ENCODE measurements at regions of chr17 and their contacts with region 1.

Region 1: GRCh38 chr17:44186307-44187130 is at the start of gene TMUB2:
- DNase-seq: peak; percentile 100
- ATAC-seq: peak; percentile 92
- H3K4me3 Mint-ChIP-seq: peak within 1 kb of the TSS; percentile 99
- H3K27ac Mint-ChIP-seq: peak within 1 kb of the TSS; percentile 100
- H3K4me1 Mint-ChIP-seq: peaks cover 32% of the 10 kb centered on the region
- H3K27me3 Mint-ChIP-seq: no peaks in the 10 kb centered on the region
- total RNA-seq, gene TMUB2: 19.8 to 20.3 TPM

Region 2: DNA sequence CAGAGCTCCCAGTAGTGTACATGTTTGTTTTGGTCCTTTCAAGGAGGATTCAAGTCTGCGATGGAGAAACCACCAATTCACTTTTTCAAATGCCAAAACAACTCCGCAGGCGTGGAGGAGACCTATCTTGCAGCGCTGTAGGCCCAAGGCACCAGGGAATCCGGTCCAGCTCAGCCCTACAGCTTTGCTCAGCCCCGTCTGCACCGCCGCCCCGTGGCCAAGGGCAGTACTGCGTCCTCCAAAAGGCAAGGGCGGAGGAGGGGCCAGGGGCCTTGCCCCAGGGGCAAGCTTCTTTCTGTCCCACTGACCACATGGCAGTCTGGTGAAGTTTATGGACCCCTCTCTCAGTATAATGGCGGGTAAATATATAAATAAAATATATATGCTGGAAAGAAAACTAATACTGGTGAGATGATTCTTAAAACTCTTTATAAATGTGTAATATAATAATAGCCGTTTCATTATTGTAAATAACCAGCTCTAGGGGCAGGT is 340.3 kb before region 1 on chr17:
- CTCF ChIA-PET with region 1: no interaction called
- POLR2A ChIA-PET with region 1: no interaction called
- intact Hi-C with region 1: no loop called
- DNase-seq: peak; percentile 89
- ATAC-seq: peak; percentile 99
- H3K4me3 Mint-ChIP-seq: no peak overlapping the region
- H3K27ac Mint-ChIP-seq: no peak overlapping the region
- H3K4me1 Mint-ChIP-seq: no peaks in the 10 kb centered on the region
- H3K27me3 Mint-ChIP-seq: peaks cover 19% of the 10 kb centered on the region

Region 3: GRCh38 chr17:43907425-43907981 is 279.0 kb before region 1 on chr17 and contains the start of gene MPP2:
- CTCF ChIA-PET with region 1: no interaction called
- POLR2A ChIA-PET with region 1: no interaction called
- intact Hi-C with region 1: no loop called
- DNase-seq: peak; percentile 75
- ATAC-seq: peak; percentile 49
- H3K4me3 Mint-ChIP-seq: peak within 1 kb of the TSS; percentile 34
- H3K27ac Mint-ChIP-seq: no peak within 1 kb of the TSS
- H3K4me1 Mint-ChIP-seq: peaks cover 17% of the 10 kb centered on the region
- H3K27me3 Mint-ChIP-seq: peaks cover 25% of the 10 kb centered on the region
- total RNA-seq, gene MPP2: 1.2 to 1.3 TPM

Region 4: DNA sequence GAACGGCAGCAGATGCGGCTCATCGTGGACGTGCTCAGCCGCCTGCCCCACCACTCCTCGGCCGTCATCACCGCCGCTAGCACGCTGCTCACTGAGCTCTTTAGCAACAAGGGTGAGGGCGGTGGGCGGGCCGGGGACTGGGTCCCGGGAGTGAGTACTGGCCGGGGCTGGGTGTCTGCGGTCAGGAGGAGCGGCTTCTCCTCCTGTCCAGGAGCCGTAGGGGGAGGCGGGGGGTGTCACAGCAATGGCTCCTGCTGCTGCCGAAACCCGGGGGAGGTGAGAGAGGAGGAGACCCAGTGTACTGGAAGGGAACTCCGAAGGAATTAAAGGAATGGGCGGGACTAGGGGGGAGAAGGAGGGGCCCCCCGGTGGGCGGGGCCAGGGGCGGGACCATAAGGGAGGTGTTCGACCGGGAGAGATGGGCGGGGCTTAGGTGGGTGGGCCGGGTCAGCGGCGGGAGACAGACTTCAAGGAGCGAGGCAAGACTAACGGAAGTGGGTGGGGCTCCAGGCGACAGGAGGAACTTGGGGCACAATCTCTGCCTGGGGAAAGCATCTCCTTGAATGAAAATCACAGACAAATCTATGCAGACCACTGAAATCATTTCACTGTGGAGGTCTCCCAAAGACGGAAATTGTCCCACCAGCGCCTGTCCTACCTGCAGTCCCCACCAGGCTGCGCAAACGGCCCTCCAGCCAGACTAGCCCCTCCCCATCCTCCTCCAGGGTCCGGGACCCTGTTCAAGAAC is 179.7 kb before region 1 on chr17:
- CTCF ChIA-PET with region 1: no interaction called
- POLR2A ChIA-PET with region 1: interaction called, 9 read pairs
- intact Hi-C with region 1: loop called in 1 of 2 experiments (anchors 1 kb)
- DNase-seq: peak; percentile 99
- ATAC-seq: peak; percentile 84
- H3K4me3 Mint-ChIP-seq: peak overlapping the region; percentile 78
- H3K27ac Mint-ChIP-seq: peak overlapping the region; percentile 86
- H3K4me1 Mint-ChIP-seq: peaks cover 20% of the 10 kb centered on the region
- H3K27me3 Mint-ChIP-seq: peaks cover 17% of the 10 kb centered on the region

Region 5: DNA sequence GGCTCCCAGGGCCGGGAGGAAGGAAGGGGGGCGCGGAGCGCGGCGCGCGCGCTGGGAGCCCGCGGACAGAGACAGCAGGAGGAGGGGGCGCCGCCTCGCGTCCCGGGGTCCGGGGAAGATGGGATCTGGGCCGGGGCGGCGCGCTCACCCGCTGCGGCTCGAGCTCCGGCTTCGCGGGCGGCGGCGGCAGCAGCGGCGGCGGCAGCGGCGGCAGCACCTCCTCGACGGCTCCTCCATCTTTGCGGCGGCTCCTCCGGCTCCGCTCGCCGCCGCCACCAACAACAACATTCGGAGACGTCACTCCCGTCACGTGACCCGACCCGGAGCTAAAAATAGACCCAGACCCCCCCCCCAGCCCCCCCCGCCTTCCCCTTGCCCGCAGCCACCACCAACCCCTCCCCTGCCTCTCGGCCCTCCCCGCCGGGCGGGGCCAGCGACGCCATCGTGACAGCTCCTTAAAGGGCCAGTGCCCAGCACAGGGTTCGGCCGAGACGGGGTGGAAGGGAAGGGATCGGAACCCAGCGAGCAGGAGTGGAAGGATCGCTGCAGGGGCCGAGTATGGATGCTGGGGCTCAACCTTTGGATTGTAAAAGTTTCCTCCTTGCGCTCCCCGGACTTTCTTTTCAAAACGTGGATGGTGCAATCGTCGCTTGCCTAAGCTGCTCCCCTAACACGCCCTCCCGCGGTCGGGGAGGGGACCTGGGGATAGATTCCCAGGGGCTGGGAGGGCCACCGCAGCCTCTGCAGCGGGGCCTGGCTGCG is 63.0 kb before region 1 on chr17 and contains the start of gene HDAC5:
- CTCF ChIA-PET with region 1: interaction called, 5 read pairs
- POLR2A ChIA-PET with region 1: interaction called, 8 read pairs
- intact Hi-C with region 1: loop called (anchors 1 to 2 kb)
- DNase-seq: peak; percentile 98
- ATAC-seq: peak; percentile 97
- H3K4me3 Mint-ChIP-seq: peak within 1 kb of the TSS; percentile 87
- H3K27ac Mint-ChIP-seq: peak within 1 kb of the TSS; percentile 97
- H3K4me1 Mint-ChIP-seq: peaks cover 22% of the 10 kb centered on the region
- H3K27me3 Mint-ChIP-seq: no peaks in the 10 kb centered on the region
- total RNA-seq, gene HDAC5: 16.5 to 22.0 TPM

Region 6: DNA sequence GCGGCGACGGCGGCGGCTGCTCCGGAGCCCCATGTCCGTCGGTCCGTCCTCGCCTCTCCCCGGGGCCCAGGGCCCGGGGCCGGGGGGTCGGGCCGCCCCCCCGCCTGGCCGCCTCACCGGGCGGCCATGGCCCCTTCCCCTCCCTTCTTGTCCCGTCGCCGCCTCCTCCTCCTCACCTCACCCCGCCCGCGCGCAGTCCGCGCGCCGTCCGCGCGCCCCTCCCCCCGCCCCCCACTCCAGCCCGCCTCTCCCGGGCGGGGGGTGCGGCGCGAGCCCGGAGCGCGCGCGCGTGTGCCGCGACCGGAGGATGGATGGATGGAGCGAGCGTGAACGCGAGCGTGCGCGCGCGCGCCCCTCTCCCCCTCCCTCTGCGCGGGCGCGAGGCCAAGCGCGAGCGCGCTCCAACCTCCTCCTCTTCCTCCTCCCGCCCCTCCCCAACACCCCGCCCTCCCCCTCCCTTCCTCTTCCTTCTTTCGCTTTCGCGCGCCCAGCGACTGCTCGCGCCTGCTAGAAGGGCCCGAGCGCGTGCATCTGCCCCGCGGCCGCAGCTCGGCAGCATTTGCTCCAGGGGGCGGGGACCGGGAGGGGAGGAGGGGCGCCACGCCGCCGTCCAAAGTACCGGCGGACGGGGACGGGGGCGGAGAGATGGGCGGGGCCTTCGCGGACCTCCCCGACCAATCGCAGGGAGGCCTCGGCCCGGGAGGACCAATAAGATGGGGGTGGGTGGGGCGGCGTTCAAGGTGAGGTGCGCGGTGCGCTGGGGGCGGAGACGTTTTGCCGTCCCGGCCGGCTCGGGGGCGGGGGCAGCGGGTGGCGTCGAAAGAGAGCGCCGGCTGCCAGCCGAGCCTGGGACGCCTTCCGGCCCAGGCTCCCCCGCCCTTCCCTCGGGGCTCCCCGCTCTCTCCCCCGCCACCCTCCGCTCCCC is 13.3 kb after region 1 on chr17 and contains the start of gene ATXN7L3:
- CTCF ChIA-PET with region 1: interaction called, 8 read pairs
- POLR2A ChIA-PET with region 1: interaction called, 4 read pairs
- intact Hi-C with region 1: loop called (anchors 1 kb)
- DNase-seq: peak; percentile 100
- ATAC-seq: peak; percentile 84
- H3K4me3 Mint-ChIP-seq: peak within 1 kb of the TSS; percentile 88
- H3K27ac Mint-ChIP-seq: peak within 1 kb of the TSS; percentile 94
- H3K4me1 Mint-ChIP-seq: peaks cover 38% of the 10 kb centered on the region
- H3K27me3 Mint-ChIP-seq: no peaks in the 10 kb centered on the region
- total RNA-seq, gene ATXN7L3: 66.3 to 70.6 TPM

Region 7: GRCh38 chr17:44324571-44325275 is 138.2 kb after region 1 on chr17 and contains the start of gene SLC25A39:
- CTCF ChIA-PET with region 1: interaction called, 3 read pairs
- POLR2A ChIA-PET with region 1: interaction called, 6 read pairs
- intact Hi-C with region 1: loop called (anchors 1 kb)
- DNase-seq: peak; percentile 97
- ATAC-seq: peak; percentile 74
- H3K4me3 Mint-ChIP-seq: peak within 1 kb of the TSS; percentile 84
- H3K27ac Mint-ChIP-seq: peak within 1 kb of the TSS; percentile 94
- H3K4me1 Mint-ChIP-seq: peaks cover 21% of the 10 kb centered on the region
- H3K27me3 Mint-ChIP-seq: no peaks in the 10 kb centered on the region
- total RNA-seq, gene SLC25A39: 127 to 129 TPM

Region 8: GRCh38 chr17:45148183-45149036 is 961.9 kb after region 1 on chr17 and contains the start of gene HEXIM1:
- CTCF ChIA-PET with region 1: no interaction called
- POLR2A ChIA-PET with region 1: no interaction called
- intact Hi-C with region 1: loop called in 1 of 2 experiments (anchors 5 kb)
- DNase-seq: peak; percentile 99
- ATAC-seq: peak; percentile 78
- H3K4me3 Mint-ChIP-seq: peak within 1 kb of the TSS; percentile 99
- H3K27ac Mint-ChIP-seq: peak within 1 kb of the TSS; percentile 100
- H3K4me1 Mint-ChIP-seq: peaks cover 37% of the 10 kb centered on the region
- H3K27me3 Mint-ChIP-seq: no peaks in the 10 kb centered on the region
- total RNA-seq, gene HEXIM1: 27.1 to 27.3 TPM

Measured in activated CD4-positive, alpha-beta T cell treated with anti-CD3 and anti-CD28 coated beads for 36 hours (primary cell).